Activated CD4-positive, alpha-beta memory T cell treated with anti-CD3 and anti-CD28 coated beads for 36 hours (primary cell): ENCODE measurements at regions of chr1 and their contacts with region 1.

Region 1: DNA sequence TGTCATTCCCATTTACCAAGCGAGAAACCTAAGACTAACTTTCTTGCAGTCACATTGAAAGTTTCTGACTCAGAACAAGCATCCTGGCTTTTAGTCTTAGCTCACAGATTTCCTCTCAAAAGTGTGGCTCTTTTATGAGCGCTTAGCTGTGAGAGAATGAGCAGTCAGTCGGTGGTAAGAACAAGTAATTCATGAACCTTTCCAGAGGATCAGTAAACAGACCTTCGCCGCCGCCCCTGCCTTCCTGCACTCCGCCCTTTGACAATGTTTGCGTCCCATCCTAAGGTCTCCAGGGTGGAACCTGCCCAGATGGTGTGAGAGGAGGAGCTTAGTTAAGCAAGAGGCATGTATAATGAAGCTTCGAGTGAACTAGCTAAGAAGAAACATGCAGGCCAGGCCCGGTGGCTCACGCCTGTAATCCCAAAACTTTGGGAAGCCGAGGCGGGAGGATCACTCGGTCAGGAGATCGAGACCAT is 142.4 kb downstream of the GLUL start:
- DNase-seq: peak; percentile 84
- H3K4me3 Mint-ChIP-seq: no peak overlapping the region
- H3K27ac Mint-ChIP-seq: peak overlapping the region; percentile 80
- H3K4me1 Mint-ChIP-seq: peaks cover 22% of the 10 kb centered on the region
- H3K27me3 Mint-ChIP-seq: peaks cover 3% of the 10 kb centered on the region

Region 2: DNA sequence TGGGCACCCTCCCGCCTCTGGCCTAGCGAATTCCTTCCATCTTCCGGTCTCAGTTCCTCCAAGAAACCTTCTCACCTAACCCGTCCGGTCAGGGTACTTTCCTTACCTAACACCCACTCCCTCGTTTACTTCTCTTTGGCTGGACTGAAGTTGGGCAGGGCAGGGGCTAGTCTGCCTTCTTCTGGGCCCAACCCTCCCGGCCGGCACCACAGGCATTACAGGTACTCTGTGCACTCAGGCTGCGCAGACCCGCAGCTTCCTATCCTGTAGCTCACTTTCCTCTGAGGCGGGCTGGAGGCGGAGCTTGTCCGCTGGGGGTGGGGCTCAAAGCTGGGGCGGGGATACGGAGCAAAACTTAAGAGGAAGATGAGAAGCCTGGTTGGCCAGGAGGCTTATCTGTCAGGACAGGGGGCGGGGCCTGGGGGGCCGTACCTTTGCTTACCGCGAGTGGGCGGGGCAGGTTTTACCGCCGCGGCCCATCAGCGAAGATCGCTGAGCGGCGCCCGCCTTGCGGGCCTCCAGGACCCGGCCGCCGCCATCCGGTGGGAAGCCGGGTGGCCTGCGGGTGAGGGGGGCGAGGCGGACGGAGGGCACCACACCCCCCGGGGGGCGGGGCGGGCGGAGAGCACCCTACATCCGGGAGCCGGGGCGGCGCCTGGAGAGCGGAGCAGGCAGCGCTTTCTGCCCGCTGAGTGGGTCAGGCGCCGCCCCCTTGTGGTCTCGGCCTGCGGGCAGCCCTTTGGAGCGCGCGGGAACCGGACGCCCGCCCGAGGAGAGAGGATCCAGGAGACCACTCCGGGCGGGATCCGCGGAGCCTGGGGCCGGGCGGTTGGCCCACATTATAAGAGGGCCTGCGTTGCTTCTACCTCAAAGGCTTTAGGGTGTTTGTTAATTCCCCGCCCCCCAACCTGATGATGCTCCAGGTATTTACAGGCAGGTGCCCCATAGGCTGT is 219.6 kb before region 1 on chr1:
- CTCF ChIA-PET with region 1: no interaction called
- POLR2A ChIA-PET with region 1: no interaction called
- intact Hi-C with region 1: loop called (anchors 5 kb)
- DNase-seq: peak; percentile 99
- H3K4me3 Mint-ChIP-seq: peak overlapping the region; percentile 88
- H3K27ac Mint-ChIP-seq: peak overlapping the region; percentile 92
- H3K4me1 Mint-ChIP-seq: peaks cover 13% of the 10 kb centered on the region
- H3K27me3 Mint-ChIP-seq: no peaks in the 10 kb centered on the region

Region 3: GRCh38 chr1:182149411-182149965 is 99.8 kb before region 1 on chr1:
- CTCF ChIA-PET with region 1: interaction called, 19 read pairs
- POLR2A ChIA-PET with region 1: interaction called, 4 read pairs
- intact Hi-C with region 1: loop called (anchors 2 kb)
- DNase-seq: peak; percentile 49
- H3K4me3 Mint-ChIP-seq: no peak overlapping the region
- H3K27ac Mint-ChIP-seq: no peak overlapping the region
- H3K4me1 Mint-ChIP-seq: peaks cover 12% of the 10 kb centered on the region
- H3K27me3 Mint-ChIP-seq: no peaks in the 10 kb centered on the region

Region 4: GRCh38 chr1:182301467-182302198 is 52.4 kb after region 1 on chr1:
- CTCF ChIA-PET with region 1: no interaction called
- POLR2A ChIA-PET with region 1: no interaction called
- intact Hi-C with region 1: loop called (anchors 1 kb)
- DNase-seq: peak; percentile 65
- H3K4me3 Mint-ChIP-seq: no peak overlapping the region
- H3K27ac Mint-ChIP-seq: peak overlapping the region; percentile 80
- H3K4me1 Mint-ChIP-seq: peaks cover 28% of the 10 kb centered on the region
- H3K27me3 Mint-ChIP-seq: no peaks in the 10 kb centered on the region

Region 5: GRCh38 chr1:182415789-182416188 is 166.6 kb after region 1 on chr1:
- CTCF ChIA-PET with region 1: no interaction called
- POLR2A ChIA-PET with region 1: no interaction called
- intact Hi-C with region 1: no loop called
- DNase-seq: no peak
- H3K4me3 Mint-ChIP-seq: no peak overlapping the region
- H3K27ac Mint-ChIP-seq: no peak overlapping the region
- H3K4me1 Mint-ChIP-seq: no peaks in the 10 kb centered on the region
- H3K27me3 Mint-ChIP-seq: peaks cover 8% of the 10 kb centered on the region

Region 6: GRCh38 chr1:182614796-182615454 is 365.7 kb after region 1 on chr1:
- CTCF ChIA-PET with region 1: no interaction called
- POLR2A ChIA-PET with region 1: no interaction called
- intact Hi-C with region 1: loop called (anchors 2 kb)
- DNase-seq: peak; percentile 76
- H3K4me3 Mint-ChIP-seq: peak overlapping the region; percentile 77
- H3K27ac Mint-ChIP-seq: peak overlapping the region; percentile 89
- H3K4me1 Mint-ChIP-seq: peaks cover 55% of the 10 kb centered on the region
- H3K27me3 Mint-ChIP-seq: peaks cover 12% of the 10 kb centered on the region